Keratinocyte (primary cell): ENCODE measurements at regions of chr2 and their contacts with region 1.

Region 1: DNA sequence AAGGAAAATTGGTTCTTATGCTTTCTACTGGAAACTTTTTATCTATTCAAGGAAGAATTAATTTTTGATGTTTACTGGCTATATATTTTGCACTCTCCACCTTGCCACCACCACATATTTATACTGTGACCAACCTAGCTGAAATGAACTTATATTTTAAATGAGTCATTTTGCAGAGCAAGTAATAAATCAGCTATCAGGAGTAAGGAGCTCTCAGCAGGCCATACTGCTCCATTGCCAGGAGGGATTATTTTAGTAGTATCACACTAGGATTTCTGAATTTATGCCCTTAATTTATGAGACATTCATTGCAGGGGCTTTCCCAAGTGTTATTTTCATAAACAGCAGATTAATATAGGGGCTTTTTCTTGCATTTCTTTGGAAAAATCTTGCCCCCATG is 125.8 kb upstream of the CYP1B1 start:
- DNase-seq: no peak
- H3K4me3 ChIP-seq: no peak overlapping the region
- H3K27ac ChIP-seq: no peak overlapping the region
- H3K4me1 ChIP-seq: no peaks in the 10 kb centered on the region
- H3K27me3 ChIP-seq: no peaks in the 10 kb centered on the region
- CTCF ChIP-seq: no peak

Region 2: DNA sequence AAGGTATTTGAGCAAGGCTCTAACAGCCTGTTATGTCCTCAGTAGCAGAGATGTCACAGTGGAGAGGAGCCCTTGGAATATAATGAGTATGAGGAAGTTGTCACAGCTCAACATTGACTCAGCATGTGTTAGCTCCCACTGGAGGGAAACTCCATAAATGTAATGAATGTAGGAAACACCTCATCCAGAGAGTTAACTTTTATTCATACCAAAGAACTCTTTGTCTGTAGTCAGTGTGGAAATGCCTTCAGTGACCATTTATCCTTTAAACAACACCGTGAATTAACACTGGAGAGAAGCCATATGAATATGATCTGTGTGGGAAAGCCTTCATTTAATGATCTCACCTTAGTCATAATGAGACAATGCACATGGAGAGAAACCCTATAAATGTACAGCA is 185.6 kb before region 1 on chr2:
- dilution Hi-C with region 1: no loop called
- DNase-seq: no peak
- H3K4me3 ChIP-seq: no peak overlapping the region
- H3K27ac ChIP-seq: no peak overlapping the region
- H3K4me1 ChIP-seq: no peaks in the 10 kb centered on the region
- H3K27me3 ChIP-seq: no peaks in the 10 kb centered on the region
- CTCF ChIP-seq: no peak

Region 3: DNA sequence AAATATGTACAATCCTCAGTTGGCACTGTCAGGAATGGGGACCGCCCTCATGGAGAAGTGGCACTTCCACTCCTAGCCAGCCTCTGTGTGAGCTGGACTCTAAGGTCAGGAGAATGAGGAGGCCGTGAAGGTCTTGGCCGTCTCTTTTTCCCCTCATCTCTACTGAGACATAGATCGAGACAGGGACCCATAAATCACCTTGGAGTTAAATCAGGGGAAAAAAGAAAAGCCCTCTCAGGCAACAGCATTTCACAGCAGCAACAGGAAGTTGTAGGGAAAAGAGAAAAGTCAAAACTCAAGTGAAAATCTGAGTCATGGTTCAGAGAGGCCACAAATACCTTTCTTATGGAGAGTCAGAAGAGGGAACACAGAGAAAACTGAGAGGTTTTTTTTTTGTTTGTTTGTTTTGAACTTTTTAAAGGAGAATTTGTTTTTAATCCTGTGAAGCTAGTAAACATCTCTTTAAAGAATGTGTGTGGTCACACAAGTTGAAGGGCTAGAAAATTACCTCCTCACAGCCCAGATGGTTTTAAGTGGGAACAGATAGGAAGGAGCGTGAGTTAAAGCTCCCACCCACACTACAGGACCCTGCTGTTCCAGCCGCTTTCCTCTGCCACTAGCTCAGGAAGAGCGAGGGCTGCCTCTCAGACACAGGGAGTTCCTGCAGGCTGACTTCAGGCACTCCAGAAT is 95.2 kb before region 1 on chr2:
- dilution Hi-C with region 1: no loop called
- DNase-seq: no peak
- H3K4me3 ChIP-seq: no peak overlapping the region
- H3K27ac ChIP-seq: peak overlapping the region; percentile 69
- H3K4me1 ChIP-seq: peaks cover 31% of the 10 kb centered on the region
- H3K27me3 ChIP-seq: no peaks in the 10 kb centered on the region
- CTCF ChIP-seq: no peak

Region 4: GRCh38 chr2:38264396-38265281 is 62.9 kb after region 1 on chr2:
- dilution Hi-C with region 1: loop called (anchors 5 kb)
- DNase-seq: no peak
- H3K4me3 ChIP-seq: no peak overlapping the region
- H3K27ac ChIP-seq: no peak overlapping the region
- H3K4me1 ChIP-seq: no peaks in the 10 kb centered on the region
- H3K27me3 ChIP-seq: no peaks in the 10 kb centered on the region
- CTCF ChIP-seq: no peak

Region 5: DNA sequence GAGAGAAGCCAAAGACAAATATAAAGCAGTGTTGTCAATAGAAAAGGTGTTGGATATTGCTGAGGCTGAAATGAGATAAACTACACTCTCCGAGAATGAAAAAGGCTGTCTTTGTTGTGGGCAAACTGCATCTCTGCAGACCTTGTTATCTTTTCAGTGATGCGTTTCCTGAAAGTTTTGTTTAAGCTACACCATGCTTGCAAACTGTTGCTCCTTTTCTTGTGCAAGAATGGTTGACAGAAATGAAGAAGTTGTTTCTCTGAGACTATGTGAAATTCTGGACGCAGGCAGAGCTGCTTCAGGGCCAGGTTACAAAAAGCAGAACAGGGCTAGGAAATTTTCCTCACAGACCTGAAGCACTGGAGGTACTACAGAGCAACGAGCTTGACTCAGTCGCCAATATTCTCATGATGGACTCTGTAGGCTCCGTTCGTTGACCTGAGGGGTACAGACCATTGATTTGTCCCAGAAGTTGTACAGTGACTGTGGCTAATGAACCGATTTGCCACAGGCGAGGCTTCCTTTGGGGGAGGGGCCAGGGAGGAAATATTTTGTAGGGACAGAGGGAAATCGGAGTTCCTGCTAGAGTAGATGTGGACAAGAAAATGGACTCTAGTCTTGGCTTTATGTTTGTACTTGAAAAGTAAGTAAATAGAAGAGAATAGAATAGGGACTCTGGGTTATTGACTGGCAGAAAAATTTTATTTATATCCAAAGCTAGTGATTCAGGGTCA is 178.8 kb after region 1 on chr2:
- dilution Hi-C with region 1: no loop called
- DNase-seq: no peak
- H3K4me3 ChIP-seq: no peak overlapping the region
- H3K27ac ChIP-seq: no peak overlapping the region
- H3K4me1 ChIP-seq: peaks cover 13% of the 10 kb centered on the region
- H3K27me3 ChIP-seq: no peaks in the 10 kb centered on the region
- CTCF ChIP-seq: no peak